ENCODE measurements at regions of chr2 and their contacts with region 1.

Region 1: DNA sequence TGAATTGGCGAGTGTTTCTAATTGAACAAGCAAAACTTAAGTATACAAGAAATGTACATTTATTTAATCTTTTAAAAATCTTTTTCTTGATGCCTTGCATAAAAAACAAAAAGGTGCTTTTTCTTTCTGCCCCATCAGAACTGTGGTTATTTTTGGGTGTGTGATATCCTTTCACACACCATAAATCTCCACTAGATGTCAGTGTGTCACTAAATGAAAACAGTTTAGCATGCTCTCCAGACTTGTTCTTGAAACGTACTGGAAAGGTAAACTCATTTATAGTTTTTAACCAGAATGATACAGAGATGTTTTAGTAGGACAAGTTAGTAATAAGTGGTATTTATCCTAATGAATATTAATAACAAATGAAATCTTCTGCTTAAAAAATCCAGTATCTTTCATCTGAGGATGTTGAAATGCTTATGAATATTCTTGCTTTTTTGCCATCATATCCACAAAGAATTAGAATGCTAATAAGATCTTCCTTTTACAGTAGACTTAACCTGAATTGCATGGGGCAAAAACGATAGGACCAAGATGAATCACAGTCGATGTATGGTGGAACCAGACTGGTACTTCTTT is 96.8 kb downstream of the UBE2E3 start:
- DNase-seq: peak; percentile 27 to 67 (median 40)
- ATAC-seq: peak; percentile 95
- H3K4me3 ChIP-seq: no peak overlapping the region
- H3K27ac ChIP-seq: no peak overlapping the region
- H3K4me1 ChIP-seq: no peaks in the 10 kb centered on the region
- H3K27me3 ChIP-seq: no peaks in the 10 kb centered on the region
- CTCF ChIP-seq: peak; percentile 42 to 72 (median 63); a peak in 5 of 6 replicates
- EP300 ChIP-seq: no peak
- POLR2A ChIP-seq: no peak
- RAD21 ChIP-seq: peak; percentile 61 to 75

Region 2: DNA sequence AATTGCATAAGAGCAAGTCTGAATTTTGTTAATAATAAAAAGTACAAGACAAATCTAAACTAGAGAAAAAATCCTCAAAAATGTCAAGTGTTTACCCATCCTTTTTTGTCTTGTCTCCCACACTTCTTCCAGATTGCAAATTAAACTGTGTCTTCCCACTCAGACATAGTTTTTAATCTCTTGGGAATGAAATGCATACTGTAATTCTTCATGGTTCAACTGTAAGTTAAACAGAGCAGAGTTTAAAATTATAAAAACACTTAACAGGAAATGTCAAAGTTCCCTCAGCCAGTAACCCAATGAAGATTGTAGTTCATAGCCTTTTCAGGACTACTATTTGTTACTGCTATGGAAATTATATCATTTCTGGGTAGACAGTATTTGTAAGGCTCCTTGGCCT is 75.0 kb after region 1 on chr2:
- CTCF ChIA-PET with region 1: no interaction called
- POLR2A ChIA-PET with region 1: no interaction called
- in situ Hi-C with region 1: no loop called
- intact Hi-C with region 1: no loop called
- DNase-seq: no peak
- ATAC-seq: no peak
- H3K4me3 ChIP-seq: no peak overlapping the region
- H3K27ac ChIP-seq: no peak overlapping the region
- H3K4me1 ChIP-seq: no peaks in the 10 kb centered on the region
- H3K27me3 ChIP-seq: no peaks in the 10 kb centered on the region
- CTCF ChIP-seq: no peak
- EP300 ChIP-seq: no peak
- POLR2A ChIP-seq: no peak
- RAD21 ChIP-seq: no peak

Region 3: GRCh38 chr2:182642328-182642727 is 1565.1 kb after region 1 on chr2:
- CTCF ChIA-PET with region 1: no interaction called
- POLR2A ChIA-PET with region 1: no interaction called
- in situ Hi-C with region 1: no loop called
- intact Hi-C with region 1: loop called (anchors 10 kb)
- DNase-seq: peak in 3 of 4 experiments; percentile 18 to 61 (median 50)
- ATAC-seq: peak; percentile 99
- H3K4me3 ChIP-seq: no peak overlapping the region
- H3K27ac ChIP-seq: no peak overlapping the region
- H3K4me1 ChIP-seq: no peaks in the 10 kb centered on the region
- H3K27me3 ChIP-seq: no peaks in the 10 kb centered on the region
- CTCF ChIP-seq: no peak
- EP300 ChIP-seq: no peak
- POLR2A ChIP-seq: no peak
- RAD21 ChIP-seq: no peak

Measured in K562 (cell line).